ENCODE measurements at regions of chr12 and their contacts with region 1.

Region 1: GRCh38 chr12:12460935-12461922 is 101.4 kb downstream of the DUSP16 start:
- DNase-seq: no peak
- ATAC-seq: no peak

Region 2: GRCh38 chr12:12415886-12416285 is 45.3 kb before region 1 on chr12:
- intact Hi-C with region 1: loop called (anchors 2 kb)
- DNase-seq: no peak
- ATAC-seq: no peak

Measured in left ventricle myocardium superior (tissue), 1 donor.